H1 (cell line): ENCODE measurements at regions of chr11 and their contacts with region 1.

Region 1: DNA sequence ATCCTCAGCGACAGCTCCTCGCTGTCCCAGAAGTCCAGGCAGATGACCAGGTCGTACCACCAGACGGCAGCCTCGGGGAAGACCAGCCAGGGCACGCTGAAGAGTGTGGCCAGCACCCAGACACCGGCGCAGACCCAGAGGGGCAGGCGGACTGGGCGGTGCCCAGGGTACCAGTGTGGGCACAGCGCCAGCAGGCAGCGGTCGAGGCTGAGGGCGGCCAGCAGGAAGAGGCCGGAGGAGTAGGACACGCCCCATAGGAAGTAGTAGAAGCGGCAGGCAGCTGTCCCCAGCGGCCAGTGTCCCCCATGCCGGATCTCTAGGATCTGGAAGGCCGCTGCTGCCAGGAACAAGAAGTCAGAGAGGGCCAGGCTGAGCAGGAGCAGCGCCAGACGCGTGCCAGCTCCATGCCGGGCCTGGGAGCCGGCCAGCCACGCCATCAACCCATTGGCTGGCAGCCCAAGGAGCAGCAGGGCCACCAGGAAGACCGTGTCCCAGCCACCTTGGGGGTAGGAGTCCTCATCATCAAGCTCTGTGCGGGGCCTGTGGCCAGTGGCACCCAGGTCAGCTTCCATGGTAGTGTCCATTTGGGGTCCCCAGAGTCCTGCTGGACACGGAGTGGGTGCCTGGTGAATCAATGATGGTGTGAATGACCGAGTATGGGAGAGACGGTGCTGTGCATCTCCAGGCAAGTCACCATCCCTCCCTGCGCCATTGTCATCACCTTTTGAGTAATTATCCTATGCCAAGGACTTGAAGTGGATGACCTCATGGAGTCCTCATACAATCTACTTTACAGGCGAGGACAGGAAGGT is at the start of gene GPR152:
- DNase-seq: no peak
- H3K4me3 ChIP-seq: no peak within 1 kb of the TSS
- H3K27ac ChIP-seq: no peak within 1 kb of the TSS
- H3K4me1 ChIP-seq: no peaks in the 10 kb centered on the region
- H3K27me3 ChIP-seq: no peaks in the 10 kb centered on the region
- CTCF ChIP-seq: no peak
- EP300 ChIP-seq: no peak
- POLR2A ChIP-seq: no peak
- RAD21 ChIP-seq: no peak
- total RNA-seq, gene GPR152: not detected in 2 replicates

Region 2: GRCh38 chr11:67409261-67409666 is 43.1 kb before region 1 on chr11:
- CTCF ChIA-PET with region 1: no interaction called
- POLR2A ChIA-PET with region 1: no interaction called
- DNase-seq: no peak
- H3K4me3 ChIP-seq: no peak overlapping the region
- H3K27ac ChIP-seq: no peak overlapping the region
- H3K4me1 ChIP-seq: peaks cover 0 to 11% (median 7%) of the 10 kb centered on the region in 4 experiments; a peak in 5 of 7 replicates
- H3K27me3 ChIP-seq: peaks cover 0 to 16% (median 5%) of the 10 kb centered on the region in 4 experiments; a peak in 4 of 7 replicates
- CTCF ChIP-seq: no peak
- EP300 ChIP-seq: no peak
- POLR2A ChIP-seq: no peak
- RAD21 ChIP-seq: no peak

Region 3: GRCh38 chr11:67468835-67469811 is 16.8 kb after region 1 on chr11 and contains the start of gene TMEM134:
- CTCF ChIA-PET with region 1: interaction called, 4 read pairs
- POLR2A ChIA-PET with region 1: interaction called, 15 read pairs
- DNase-seq: peak; percentile 70 to 93
- H3K4me3 ChIP-seq: peak within 1 kb of the TSS; percentile 55 to 90 (median 76)
- H3K27ac ChIP-seq: peak within 1 kb of the TSS; percentile 58; the same call in 1 of the 2 replicates
- H3K4me1 ChIP-seq: peaks cover under 1 to 12% (median 3%) of the 10 kb centered on the region in 4 experiments; a peak in 6 of 7 replicates
- H3K27me3 ChIP-seq: no peaks in the 10 kb centered on the region
- CTCF ChIP-seq: peak; percentile 45 to 63 (median 59)
- EP300 ChIP-seq: no peak
- POLR2A ChIP-seq: peak; percentile 57 to 84
- RAD21 ChIP-seq: peak; percentile 57 to 72
- total RNA-seq, gene TMEM134: 32.4 and 33.5 TPM in 2 replicates